ENCODE measurements at regions of chr12 and their contacts with region 1.

Region 1: DNA sequence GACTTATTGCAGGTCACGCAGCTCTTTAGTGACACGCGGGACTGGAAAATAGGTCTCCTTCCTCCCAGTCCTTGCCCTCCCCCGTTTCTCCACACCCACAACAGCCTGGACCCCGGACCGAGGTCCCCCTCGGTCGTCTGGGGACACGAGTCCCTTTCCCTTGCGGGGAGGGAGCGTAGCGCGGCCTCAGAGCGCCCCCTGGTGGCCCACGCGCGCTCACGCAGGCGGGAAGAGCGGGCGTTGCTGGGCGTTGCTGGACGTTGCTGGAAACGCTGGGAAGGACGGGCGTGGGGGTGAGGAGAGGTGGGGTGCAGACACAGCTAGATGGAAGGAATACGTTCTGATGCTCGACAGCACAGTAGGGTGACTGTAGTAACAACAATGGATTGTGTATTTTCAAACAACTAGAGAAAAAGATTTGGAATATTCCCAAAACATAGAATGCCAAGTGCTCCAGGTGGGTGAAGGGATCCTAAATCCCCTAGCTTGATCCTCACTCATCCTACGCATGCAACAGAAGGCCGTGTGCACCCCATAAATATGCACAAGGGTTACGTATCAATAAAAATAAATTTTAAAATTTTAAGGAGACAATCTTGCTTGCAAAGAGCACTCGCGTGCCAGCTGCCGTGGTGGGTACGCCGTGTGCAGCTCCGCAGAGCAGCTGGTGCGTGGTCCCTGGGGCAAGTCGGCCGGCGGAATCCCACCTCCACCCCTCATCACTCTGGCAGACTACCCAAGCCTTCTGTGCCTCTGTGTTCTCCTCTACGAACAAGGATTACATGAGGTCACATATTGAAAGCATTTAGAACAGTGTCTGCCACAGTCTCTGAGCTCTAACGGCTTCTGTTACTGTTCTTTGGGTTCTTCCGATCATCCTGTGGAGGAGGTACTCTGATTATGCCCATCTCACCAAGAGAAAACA is 87.4 kb downstream of the B4GALNT3 start:
- DNase-seq: no peak
- H3K4me3 ChIP-seq: peak overlapping the region; percentile 36; the same call in 1 of the 2 replicates
- CTCF ChIP-seq: peak; percentile 100

Region 2: DNA sequence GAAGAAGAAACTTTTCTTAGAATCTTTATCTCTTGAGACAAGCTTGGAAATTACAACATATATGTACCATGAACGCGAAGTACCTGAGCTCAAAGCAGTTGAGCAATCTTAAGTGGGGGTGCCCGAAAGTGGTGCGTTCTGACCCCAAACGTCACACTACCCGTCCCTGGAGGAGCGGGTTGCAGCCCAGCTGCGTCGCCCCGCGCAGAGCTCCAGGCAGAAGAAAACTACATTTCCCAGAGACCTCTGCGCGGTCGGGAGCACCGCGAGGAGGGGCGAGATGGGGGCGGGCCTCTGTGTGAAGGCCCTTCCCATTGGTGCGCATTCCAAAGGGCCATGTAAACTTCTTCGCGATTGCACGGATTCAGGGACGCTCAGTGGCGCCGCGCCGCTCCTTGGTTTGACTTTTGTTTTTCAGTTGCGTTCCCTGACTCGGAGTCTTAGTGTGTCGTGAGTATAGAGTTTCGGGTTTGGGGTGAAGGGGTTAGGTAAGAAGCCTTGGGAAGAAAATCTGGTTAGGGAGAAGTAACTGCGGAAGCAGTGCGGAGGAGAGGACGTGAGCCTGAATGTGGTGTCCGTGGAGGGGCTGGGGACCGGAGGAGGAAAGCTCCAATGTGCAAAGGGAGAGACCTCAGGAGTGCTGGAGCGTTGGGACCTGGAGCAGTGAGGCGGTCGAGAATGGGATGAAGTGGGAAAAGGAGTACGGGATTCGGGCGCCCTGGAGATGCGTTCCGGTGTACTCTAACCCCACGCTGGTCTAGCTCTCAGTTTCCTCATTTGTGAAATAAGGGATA is 145.8 kb before region 1 on chr12 and contains the start of gene CCDC77:
- CTCF ChIA-PET with region 1: interaction called, 14 read pairs
- POLR2A ChIA-PET with region 1: no interaction called
- DNase-seq: peak; percentile 40
- H3K4me3 ChIP-seq: peak within 1 kb of the TSS; percentile 68
- CTCF ChIP-seq: peak; percentile 39

Region 3: GRCh38 chr12:442235-442884 is 104.8 kb before region 1 on chr12:
- CTCF ChIA-PET with region 1: interaction called, 347 read pairs
- POLR2A ChIA-PET with region 1: no interaction called
- DNase-seq: no peak
- H3K4me3 ChIP-seq: no peak overlapping the region
- CTCF ChIP-seq: peak; percentile 74

Region 4: GRCh38 chr12:464484-465267 is 82.5 kb before region 1 on chr12:
- CTCF ChIA-PET with region 1: interaction called, 26 read pairs
- POLR2A ChIA-PET with region 1: no interaction called
- DNase-seq: no peak
- H3K4me3 ChIP-seq: no peak overlapping the region
- CTCF ChIP-seq: no peak

Region 5: GRCh38 chr12:496736-497135 is 50.4 kb before region 1 on chr12:
- CTCF ChIA-PET with region 1: interaction called, 18 read pairs
- POLR2A ChIA-PET with region 1: no interaction called
- DNase-seq: no peak
- H3K4me3 ChIP-seq: no peak overlapping the region
- CTCF ChIP-seq: no peak

Region 6: GRCh38 chr12:532908-533565 is 14.1 kb before region 1 on chr12:
- CTCF ChIA-PET with region 1: interaction called, 127 read pairs
- POLR2A ChIA-PET with region 1: no interaction called
- DNase-seq: peak; percentile 82
- H3K4me3 ChIP-seq: no peak overlapping the region
- CTCF ChIP-seq: no peak

Region 7: DNA sequence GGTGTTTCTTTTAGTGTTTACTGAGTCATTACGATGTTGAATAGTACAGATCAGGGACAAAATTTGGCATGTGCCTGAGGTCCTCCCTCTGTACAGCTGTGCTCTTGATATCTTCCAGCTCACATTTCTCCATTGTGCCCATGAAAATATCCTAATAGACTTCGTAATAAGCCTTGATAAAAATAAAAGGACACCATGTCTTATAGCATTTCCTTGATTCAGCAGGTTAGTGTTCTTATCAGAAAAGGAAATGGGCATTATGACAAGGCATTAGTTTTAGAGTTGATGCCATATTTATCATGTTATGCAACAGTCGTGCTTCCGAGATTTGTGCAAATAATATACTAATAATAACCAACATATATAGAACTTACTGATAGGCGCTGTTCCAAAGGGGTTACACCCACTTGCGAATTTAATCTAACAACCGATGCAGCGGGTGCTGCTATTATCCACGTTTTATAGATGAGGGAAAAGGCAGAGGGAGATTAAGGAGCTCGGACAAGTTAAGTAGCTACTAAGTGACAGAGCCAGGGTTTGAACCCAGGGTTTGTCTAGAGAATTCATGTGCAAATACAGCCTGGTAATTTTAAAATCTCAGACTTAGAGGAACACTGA is 190.0 kb after region 1 on chr12:
- CTCF ChIA-PET with region 1: no interaction called
- POLR2A ChIA-PET with region 1: no interaction called
- DNase-seq: no peak
- H3K4me3 ChIP-seq: no peak overlapping the region
- CTCF ChIP-seq: no peak

Measured in AG04449 (cell line).